Aorta (tissue), 5 donors: ENCODE measurements at regions of chr10 and their contacts with region 1.

Region 1: DNA sequence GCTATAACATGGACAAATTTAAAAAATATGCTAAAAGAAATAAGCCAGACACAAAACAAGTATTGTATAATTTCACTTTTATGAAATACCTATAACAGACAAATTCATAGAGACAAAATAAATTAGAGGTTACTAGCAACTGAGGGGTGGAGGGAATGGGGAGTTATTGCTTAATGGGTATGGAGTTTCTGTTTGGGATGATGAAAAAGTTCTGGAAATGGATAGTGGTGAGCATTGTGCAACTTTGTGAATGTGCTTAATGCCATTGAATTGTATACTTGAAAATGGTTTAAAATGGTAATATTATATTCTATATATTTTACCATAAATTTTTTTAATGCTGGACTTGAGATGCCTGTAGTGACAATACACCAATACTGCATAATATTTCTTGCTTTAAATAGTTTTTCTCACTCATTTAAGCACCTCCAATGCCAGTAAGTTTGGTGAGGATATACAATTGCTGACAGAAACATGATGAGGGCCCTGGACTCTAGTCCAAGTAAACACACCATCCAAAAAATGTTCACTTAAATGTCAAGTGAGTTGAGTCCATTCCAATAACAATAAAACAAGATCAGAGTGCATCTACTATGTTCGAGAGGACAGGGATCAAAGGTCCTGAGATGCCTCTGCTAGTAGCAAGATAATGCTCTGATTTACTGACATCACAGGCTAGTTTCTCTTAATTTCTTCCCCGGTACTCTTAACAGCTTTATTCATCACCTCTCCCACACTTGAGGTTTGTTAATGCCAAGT is 71.9 kb downstream of the NT5C2 start:
- DNase-seq: no peak
- ATAC-seq: peak; percentile 58
- H3K4me3 ChIP-seq: no peak overlapping the region
- H3K27ac ChIP-seq: no peak overlapping the region
- H3K4me1 ChIP-seq: peaks cover 8 to 18% of the 10 kb centered on the region in 2 donors
- H3K27me3 ChIP-seq: no peaks in the 10 kb centered on the region

Region 2: GRCh38 chr10:103062604-103063590 is 58.3 kb before region 1 on chr10:
- intact Hi-C with region 1: no loop called
- DNase-seq: no peak
- ATAC-seq: no peak
- H3K4me3 ChIP-seq: no peak overlapping the region
- H3K27ac ChIP-seq: no peak overlapping the region
- H3K4me1 ChIP-seq: no peaks in the 10 kb centered on the region
- H3K27me3 ChIP-seq: no peaks in the 10 kb centered on the region

Region 3: GRCh38 chr10:103086799-103087198 is 34.4 kb before region 1 on chr10:
- intact Hi-C with region 1: loop called in 1 of 2 experiments (anchors 2 kb)
- DNase-seq: no peak
- ATAC-seq: no peak
- H3K4me3 ChIP-seq: no peak overlapping the region
- H3K27ac ChIP-seq: peak overlapping the region; percentile 39 to 60
- H3K4me1 ChIP-seq: peaks cover 0 to 7% of the 10 kb centered on the region in 2 donors
- H3K27me3 ChIP-seq: no peaks in the 10 kb centered on the region

Region 4: DNA sequence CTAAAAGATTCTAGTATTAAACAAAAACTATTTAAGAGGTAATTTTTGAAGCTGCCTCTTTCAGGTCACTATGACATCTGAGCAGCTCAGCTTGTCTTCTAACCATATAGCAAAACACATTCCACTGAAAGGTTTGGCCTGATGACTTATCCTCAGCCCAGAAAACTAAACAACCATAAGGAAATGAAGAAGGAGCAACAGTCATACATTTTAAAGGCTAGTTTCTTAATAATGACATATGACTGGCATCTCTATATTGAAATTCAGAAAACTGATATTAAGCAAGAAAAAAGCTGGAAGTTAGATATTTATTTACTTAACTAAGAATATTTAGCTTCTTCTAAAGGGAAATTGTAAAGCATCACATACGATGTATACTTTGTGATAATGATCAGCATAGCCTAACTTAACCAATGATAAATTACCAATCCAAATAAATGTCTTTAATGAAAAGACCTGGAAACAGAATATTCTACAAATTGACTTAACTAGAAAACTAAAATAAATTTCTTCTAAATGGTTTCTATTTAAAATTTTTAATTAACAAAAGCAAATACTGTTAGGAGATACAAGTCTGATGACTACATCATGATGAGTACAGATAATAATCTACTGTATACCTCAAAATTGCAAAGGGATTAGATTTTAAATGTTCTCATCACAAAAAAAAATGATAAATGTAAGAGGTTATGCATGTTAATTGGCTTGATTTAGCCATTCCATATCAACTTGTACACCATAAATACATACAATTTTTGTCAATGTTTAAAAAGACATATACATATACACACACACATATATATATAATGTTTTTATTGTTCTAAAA is 47.5 kb after region 1 on chr10:
- intact Hi-C with region 1: no loop called
- DNase-seq: no peak
- ATAC-seq: no peak
- H3K4me3 ChIP-seq: no peak overlapping the region
- H3K27ac ChIP-seq: no peak overlapping the region
- H3K4me1 ChIP-seq: no peaks in the 10 kb centered on the region
- H3K27me3 ChIP-seq: no peaks in the 10 kb centered on the region

Region 5: DNA sequence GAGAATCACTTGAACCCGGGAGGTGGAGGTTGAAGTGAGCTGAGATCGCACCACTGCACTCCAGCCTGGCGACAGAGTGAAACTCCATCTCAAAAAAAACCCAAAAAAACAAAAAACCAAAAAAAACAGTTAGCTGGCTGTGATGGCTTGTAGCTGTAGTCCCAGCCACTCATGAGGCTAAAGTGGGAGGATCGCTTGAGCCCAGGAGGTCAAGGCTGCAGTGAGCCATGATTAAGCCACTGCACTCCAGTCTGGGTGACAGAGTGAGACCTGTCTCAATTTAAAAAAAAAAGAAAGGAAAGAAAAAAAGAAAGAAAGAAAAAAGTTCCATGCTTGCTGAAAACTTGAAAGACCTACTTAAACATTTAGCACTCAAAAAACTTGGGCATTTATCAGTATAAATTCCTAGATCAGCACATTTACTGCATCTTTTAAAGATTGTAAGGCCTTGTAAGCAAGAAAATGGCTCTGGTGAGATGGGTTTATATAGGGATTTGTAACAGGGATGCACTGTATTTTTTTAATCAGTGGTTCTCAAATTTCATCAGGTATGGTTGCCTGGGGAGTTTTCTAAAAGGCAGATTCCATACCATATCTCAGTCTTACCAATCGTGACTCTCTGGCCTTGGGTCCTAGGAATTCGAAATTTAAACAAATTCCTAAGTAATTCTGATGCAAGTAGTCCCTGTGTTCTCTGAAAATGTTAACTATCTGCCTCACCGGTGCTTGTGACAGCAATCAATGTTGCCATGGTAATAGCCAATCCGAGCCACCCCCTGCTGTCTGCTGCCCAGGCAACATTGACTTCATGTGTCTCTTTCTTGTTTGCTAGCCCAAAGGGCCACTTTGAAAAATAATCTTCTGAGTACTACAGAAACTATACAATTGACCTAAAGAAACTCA is 83.4 kb after region 1 on chr10:
- intact Hi-C with region 1: no loop called
- DNase-seq: no peak
- ATAC-seq: no peak
- H3K4me3 ChIP-seq: no peak overlapping the region
- H3K27ac ChIP-seq: no peak overlapping the region
- H3K4me1 ChIP-seq: no peaks in the 10 kb centered on the region
- H3K27me3 ChIP-seq: no peaks in the 10 kb centered on the region

Region 6: DNA sequence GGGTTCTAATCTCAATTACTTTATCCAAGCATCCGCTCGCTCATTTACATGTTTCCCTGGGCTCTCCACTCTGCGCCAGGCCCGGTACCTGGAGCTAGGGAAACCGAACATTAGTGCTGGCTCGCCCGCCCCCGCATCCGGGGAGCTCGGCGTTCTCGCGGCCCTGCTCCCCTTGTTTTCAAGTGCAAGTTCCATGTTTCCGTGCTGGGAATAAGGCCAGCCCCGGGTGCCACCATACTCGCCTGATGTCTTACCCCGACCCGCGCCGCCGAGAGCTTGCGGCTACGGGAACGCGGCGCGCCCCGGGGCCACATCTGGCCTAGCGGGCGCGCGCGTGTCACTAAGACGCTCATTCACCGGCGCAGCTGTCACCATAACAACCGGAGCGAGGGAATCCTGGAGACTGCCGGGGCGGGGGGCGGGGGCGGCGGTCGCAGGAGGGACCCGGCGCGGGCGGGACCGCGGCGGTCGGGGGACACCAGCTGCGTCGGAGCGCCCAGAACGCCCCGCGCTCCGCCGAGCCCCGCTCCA is 372.3 kb after region 1 on chr10 and contains the start of gene NEURL1:
- intact Hi-C with region 1: no loop called
- DNase-seq: no peak
- ATAC-seq: no peak
- H3K4me3 ChIP-seq: peak within 1 kb of the TSS; percentile 36 to 65
- H3K27ac ChIP-seq: no peak within 1 kb of the TSS
- H3K4me1 ChIP-seq: no peaks in the 10 kb centered on the region
- H3K27me3 ChIP-seq: no peaks in the 10 kb centered on the region
- total RNA-seq, gene NEURL1: 0.16 to 0.18 TPM